Activated B cell treated with CpG ODN at 0.5 μM for 24 hours (primary cell): ENCODE measurements at regions of chr7 and their contacts with region 1.

Region 1: DNA sequence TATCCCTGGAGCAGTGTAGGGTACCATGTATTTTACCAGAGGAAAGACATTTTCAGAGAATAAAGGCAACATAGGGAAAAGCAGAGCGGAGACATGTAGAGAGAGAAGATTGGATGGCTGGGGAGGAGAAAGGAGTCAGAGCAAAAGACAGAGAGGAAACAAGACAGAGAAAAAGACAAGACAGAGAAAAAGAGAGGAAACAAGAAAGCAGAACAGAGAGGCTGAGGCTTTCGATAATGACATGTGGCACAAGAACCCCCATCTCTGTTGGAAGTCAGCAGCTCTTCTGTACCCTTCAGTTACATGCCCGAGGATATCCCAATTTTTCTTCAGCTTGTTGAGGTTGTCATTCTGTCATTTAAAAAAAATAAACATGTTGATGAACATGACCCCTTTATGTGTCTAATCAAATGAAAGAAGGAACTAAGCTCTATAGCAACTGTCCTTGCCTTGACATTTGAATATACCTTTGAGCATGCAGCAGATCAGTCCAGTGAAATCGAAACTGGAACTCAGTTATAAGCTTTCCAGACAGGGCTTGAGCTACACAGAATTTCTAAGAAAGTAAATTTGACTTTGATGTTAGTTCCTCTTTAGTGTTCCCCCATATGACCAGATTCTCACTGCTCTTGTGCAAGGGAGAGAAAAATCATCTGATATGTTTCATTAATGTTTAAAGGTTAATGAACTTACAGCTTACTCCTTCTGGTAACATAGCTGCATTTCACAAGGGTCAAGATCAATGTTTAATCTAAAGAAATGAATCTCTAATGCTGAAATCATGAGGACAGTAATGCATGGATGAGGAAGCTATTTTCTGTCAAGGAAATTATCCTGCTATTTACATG is 75.1 kb upstream of the SP4 start:
- DNase-seq: no peak
- ATAC-seq: peak; percentile 84
- H3K4me3 Mint-ChIP-seq: peak overlapping the region; percentile 71
- H3K27ac Mint-ChIP-seq: peak overlapping the region; percentile 88
- H3K4me1 Mint-ChIP-seq: peaks cover 58% of the 10 kb centered on the region
- H3K27me3 Mint-ChIP-seq: no peaks in the 10 kb centered on the region
- CTCF ChIP-seq: no peak

Region 2: DNA sequence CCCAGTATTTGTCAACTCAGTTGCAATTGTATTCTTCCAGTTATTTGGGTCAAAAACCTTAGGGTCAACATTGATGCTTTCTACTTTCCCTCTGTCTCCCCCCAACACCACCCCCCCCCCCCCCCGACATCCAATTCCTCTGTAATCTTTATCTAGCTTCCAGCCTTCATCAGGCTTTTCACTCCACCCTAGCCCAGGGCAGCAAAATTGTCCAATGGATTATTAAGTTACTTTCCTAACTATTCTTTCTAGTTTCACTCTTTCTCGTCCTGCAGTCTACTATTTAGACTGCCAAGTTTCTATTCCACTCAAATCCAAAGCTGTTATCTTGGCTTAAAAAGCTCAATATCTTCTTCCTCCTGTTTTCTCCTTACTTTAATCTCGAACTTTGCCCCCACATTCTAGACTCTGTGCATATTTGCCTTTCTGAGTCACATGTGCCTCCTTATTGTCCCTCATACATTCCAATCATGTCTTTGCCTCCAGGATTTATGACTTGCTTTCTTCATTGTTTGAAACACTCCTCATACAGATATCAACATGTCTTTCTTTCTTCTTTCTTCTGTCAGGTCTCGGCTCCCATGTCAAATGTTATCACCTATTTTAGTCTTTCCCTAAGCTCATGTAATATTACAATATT is 1382.8 kb before region 1 on chr7:
- CTCF ChIA-PET with region 1: no interaction called
- POLR2A ChIA-PET with region 1: no interaction called
- intact Hi-C with region 1: no loop called
- DNase-seq: no peak
- ATAC-seq: no peak
- H3K4me3 Mint-ChIP-seq: no peak overlapping the region
- H3K27ac Mint-ChIP-seq: no peak overlapping the region
- H3K4me1 Mint-ChIP-seq: no peaks in the 10 kb centered on the region
- H3K27me3 Mint-ChIP-seq: no peaks in the 10 kb centered on the region
- CTCF ChIP-seq: no peak

Region 3: DNA sequence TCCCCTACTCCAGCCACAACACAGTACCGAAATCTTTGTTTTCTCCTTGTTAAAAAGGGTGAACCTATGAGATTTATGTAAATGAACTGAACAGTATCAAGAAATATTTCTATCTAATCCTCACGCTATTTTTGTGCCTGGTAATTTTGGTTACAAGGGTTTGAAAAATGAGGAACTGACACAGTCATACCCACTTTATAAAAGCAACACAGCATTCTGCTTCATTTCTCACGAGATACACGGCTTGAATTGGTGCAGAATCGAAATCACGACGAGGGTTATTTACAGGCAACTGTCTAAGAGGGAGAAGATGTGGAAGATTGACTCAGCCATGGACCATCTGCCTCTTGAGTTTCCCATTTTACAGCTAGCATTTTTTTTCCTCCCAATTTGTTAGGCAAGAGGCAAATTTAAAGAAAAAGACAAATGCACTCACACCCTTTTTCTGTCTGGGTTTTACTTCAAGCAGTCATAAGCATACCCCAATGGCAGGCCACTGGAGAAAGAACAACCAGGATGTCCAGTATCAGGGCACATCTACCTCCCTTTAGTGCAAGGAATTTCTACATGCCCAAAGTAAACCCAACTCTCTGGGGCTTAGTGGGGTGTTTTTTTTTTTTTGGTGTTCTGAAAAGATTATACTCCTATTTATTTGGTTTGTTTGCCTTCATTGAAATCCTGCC is 913.9 kb before region 1 on chr7:
- CTCF ChIA-PET with region 1: no interaction called
- POLR2A ChIA-PET with region 1: no interaction called
- intact Hi-C with region 1: loop called (anchors 10 kb)
- DNase-seq: no peak
- ATAC-seq: peak; percentile 88
- H3K4me3 Mint-ChIP-seq: peak overlapping the region; percentile 13
- H3K27ac Mint-ChIP-seq: no peak overlapping the region
- H3K4me1 Mint-ChIP-seq: peaks cover 28% of the 10 kb centered on the region
- H3K27me3 Mint-ChIP-seq: peaks cover 7% of the 10 kb centered on the region
- CTCF ChIP-seq: no peak

Region 4: GRCh38 chr7:21300692-21301091 is 52.1 kb before region 1 on chr7:
- CTCF ChIA-PET with region 1: no interaction called
- POLR2A ChIA-PET with region 1: interaction called, 3 read pairs
- intact Hi-C with region 1: loop called (anchors 5 kb)
- DNase-seq: no peak
- ATAC-seq: no peak
- H3K4me3 Mint-ChIP-seq: no peak overlapping the region
- H3K27ac Mint-ChIP-seq: no peak overlapping the region
- H3K4me1 Mint-ChIP-seq: peaks cover 6% of the 10 kb centered on the region
- H3K27me3 Mint-ChIP-seq: no peaks in the 10 kb centered on the region
- CTCF ChIP-seq: no peak

Region 5: DNA sequence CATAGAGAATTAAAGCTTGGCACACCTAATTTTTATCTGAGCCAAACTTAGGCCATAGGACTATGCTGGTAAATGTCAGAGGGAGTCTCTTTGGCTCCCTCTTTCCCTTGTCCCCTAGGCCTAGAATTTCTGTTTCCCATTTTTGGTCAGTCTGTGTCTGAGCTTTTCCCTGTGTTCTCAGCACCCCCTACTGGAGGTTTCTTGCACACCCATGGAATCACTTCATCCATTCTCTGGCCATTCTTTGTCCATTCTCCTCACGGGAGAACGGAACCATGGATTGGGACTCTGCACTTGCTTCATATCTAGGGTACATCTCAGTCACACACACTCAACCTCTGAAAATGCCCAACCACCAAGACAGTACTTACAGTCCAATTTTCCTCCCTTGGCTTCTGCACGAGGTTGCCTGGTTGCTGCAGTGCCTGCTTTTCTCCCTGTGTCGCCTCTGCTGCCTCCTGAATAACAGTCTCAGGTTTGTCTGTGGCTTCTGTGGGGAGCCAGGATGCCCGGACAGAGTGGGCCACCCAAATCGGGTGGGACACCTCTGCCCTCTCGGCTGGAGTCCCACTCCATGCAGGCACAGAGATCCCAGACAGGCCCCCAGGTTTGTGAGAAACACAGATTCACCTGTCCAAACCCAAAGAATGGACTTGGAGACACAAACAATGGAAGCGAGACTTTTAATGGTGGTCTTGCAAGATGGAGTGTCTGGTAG is 155.0 kb after region 1 on chr7:
- CTCF ChIA-PET with region 1: no interaction called
- POLR2A ChIA-PET with region 1: no interaction called
- intact Hi-C with region 1: no loop called
- DNase-seq: no peak
- ATAC-seq: no peak
- H3K4me3 Mint-ChIP-seq: no peak overlapping the region
- H3K27ac Mint-ChIP-seq: no peak overlapping the region
- H3K4me1 Mint-ChIP-seq: no peaks in the 10 kb centered on the region
- H3K27me3 Mint-ChIP-seq: no peaks in the 10 kb centered on the region
- CTCF ChIP-seq: no peak

Region 6: GRCh38 chr7:21939136-21939857 is 586.5 kb after region 1 on chr7:
- CTCF ChIA-PET with region 1: no interaction called
- POLR2A ChIA-PET with region 1: no interaction called
- intact Hi-C with region 1: loop called (anchors 1 kb)
- DNase-seq: no peak
- ATAC-seq: peak; percentile 55
- H3K4me3 Mint-ChIP-seq: peak overlapping the region; percentile 64
- H3K27ac Mint-ChIP-seq: peak overlapping the region; percentile 75
- H3K4me1 Mint-ChIP-seq: peaks cover 93% of the 10 kb centered on the region
- H3K27me3 Mint-ChIP-seq: no peaks in the 10 kb centered on the region
- CTCF ChIP-seq: no peak

Region 7: GRCh38 chr7:22082886-22083703 is 730.3 kb after region 1 on chr7:
- CTCF ChIA-PET with region 1: no interaction called
- POLR2A ChIA-PET with region 1: no interaction called
- intact Hi-C with region 1: loop called (anchors 5 kb)
- DNase-seq: peak; percentile 91
- ATAC-seq: peak; percentile 97
- H3K4me3 Mint-ChIP-seq: peak overlapping the region; percentile 89
- H3K27ac Mint-ChIP-seq: peak overlapping the region; percentile 70
- H3K4me1 Mint-ChIP-seq: peaks cover 13% of the 10 kb centered on the region
- H3K27me3 Mint-ChIP-seq: peaks cover 25% of the 10 kb centered on the region
- CTCF ChIP-seq: peak; percentile 83